ENCODE measurements at regions of chr6 and their contacts with region 1.

Region 1: DNA sequence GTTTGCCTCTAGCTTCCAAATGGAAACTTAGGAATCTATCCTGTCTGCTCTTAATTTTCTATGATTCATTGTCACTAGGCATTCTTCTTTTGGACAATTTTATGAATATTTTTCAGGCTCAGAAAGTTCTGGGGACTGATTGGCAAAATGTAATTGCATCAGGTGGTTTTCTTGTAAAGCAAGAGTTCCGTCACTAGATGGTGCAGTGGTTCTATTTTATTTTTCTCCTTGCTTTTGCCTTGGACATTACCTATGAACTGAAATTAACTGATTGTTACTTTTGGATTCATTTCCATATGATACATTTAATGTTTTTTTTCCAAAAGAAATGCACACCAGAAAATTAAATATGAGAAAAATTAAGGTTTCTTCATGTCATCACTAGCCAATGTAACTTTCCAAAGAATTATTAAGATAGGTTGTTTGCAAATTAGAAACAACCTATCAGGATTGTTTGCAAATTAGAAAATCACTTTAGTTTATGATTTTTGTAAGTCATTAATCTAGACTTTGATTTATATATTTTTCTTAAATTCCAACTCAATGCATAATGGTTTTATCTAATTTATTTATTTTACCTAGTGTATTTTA is 48.0 kb downstream of the TMEM170B start:
- DNase-seq: peak; percentile 18 to 59
- H3K4me3 ChIP-seq: no peak overlapping the region
- H3K27ac ChIP-seq: no peak overlapping the region
- H3K4me1 ChIP-seq: peaks cover 14% of the 10 kb centered on the region
- H3K27me3 ChIP-seq: no peaks in the 10 kb centered on the region
- CTCF ChIP-seq: peak; percentile 95

Region 2: GRCh38 chr6:10779076-10779475 is 806.4 kb before region 1 on chr6:
- CTCF ChIA-PET with region 1: no interaction called
- POLR2A ChIA-PET with region 1: no interaction called
- intact Hi-C with region 1: no loop called
- DNase-seq: no peak
- H3K4me3 ChIP-seq: no peak overlapping the region
- H3K27ac ChIP-seq: no peak overlapping the region
- H3K4me1 ChIP-seq: no peaks in the 10 kb centered on the region
- H3K27me3 ChIP-seq: no peaks in the 10 kb centered on the region
- CTCF ChIP-seq: no peak

Region 3: GRCh38 chr6:11653028-11653583 is 67.6 kb after region 1 on chr6:
- CTCF ChIA-PET with region 1: no interaction called
- POLR2A ChIA-PET with region 1: interaction called, 7 read pairs
- intact Hi-C with region 1: loop called (anchors 1 kb)
- DNase-seq: peak; percentile 55 to 69
- H3K4me3 ChIP-seq: no peak overlapping the region
- H3K27ac ChIP-seq: peak overlapping the region; percentile 15; the same call in 1 of the 2 replicates
- H3K4me1 ChIP-seq: peaks cover 48% of the 10 kb centered on the region
- H3K27me3 ChIP-seq: no peaks in the 10 kb centered on the region
- CTCF ChIP-seq: no peak

Region 4: GRCh38 chr6:11854408-11855165 is 269.1 kb after region 1 on chr6:
- CTCF ChIA-PET with region 1: no interaction called
- POLR2A ChIA-PET with region 1: no interaction called
- intact Hi-C with region 1: loop called (anchors 10 kb)
- DNase-seq: peak in 1 of 2 experiments; percentile 74
- H3K4me3 ChIP-seq: no peak overlapping the region
- H3K27ac ChIP-seq: peak overlapping the region; percentile 18; the same call in 1 of the 2 replicates
- H3K4me1 ChIP-seq: peaks cover 30% of the 10 kb centered on the region
- H3K27me3 ChIP-seq: no peaks in the 10 kb centered on the region
- CTCF ChIP-seq: no peak

Region 5: GRCh38 chr6:12233693-12234571 is 648.4 kb after region 1 on chr6:
- CTCF ChIA-PET with region 1: no interaction called
- POLR2A ChIA-PET with region 1: no interaction called
- intact Hi-C with region 1: loop called (anchors 1 kb)
- DNase-seq: peak; percentile 47 to 84
- H3K4me3 ChIP-seq: no peak overlapping the region
- H3K27ac ChIP-seq: no peak overlapping the region
- H3K4me1 ChIP-seq: peaks cover 5% of the 10 kb centered on the region
- H3K27me3 ChIP-seq: no peaks in the 10 kb centered on the region
- CTCF ChIP-seq: peak; percentile 95

Region 6: GRCh38 chr6:12605888-12606345 is 1020.4 kb after region 1 on chr6:
- CTCF ChIA-PET with region 1: no interaction called
- POLR2A ChIA-PET with region 1: no interaction called
- intact Hi-C with region 1: loop called (anchors 1 kb)
- DNase-seq: peak; percentile 53 to 79
- H3K4me3 ChIP-seq: no peak overlapping the region
- H3K27ac ChIP-seq: no peak overlapping the region
- H3K4me1 ChIP-seq: peaks cover 16% of the 10 kb centered on the region
- H3K27me3 ChIP-seq: no peaks in the 10 kb centered on the region
- CTCF ChIP-seq: peak; percentile 98

Measured in PC-9 (cell line).